ENCODE measurements at regions of chr3 and their contacts with region 1.

Region 1: DNA sequence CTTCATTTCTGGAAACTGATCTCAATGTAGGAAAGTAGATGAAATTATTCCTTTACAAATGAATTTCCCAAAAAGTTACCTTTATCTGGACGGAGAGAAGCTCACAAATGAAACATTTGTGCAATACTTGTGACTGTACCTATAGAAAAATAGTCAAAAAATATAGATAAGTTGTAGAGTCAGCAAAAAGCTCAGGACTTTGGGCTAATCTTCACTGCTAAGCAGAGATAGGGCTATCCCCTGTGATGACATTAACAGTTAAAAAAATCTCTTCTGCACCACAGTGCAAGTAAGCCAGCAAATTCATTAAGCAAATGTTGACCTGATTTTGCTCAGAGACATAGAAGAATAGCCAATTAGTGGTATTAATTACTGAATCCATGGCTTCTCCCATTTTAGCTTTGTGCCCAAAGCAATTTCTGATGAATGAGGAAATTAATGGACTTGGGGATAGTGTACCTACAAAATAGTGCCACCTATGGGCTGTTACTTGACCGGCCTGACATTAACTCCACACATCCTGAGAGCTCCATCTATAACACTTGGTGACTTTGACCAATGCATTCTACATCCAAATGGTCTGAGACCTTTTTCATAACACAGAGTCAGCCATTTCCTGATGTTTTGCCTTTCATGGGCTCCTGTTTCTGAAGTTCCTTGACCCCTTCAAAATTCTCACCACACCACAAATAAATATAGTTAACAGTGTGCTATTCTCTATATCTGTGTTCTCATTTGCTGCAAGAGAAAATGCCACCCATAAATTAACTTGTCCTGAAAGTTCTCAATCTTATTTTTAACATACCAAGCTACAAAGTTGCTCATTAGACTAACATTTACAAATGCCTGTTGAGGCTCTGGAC is 105.0 kb downstream of the SSR3 start:
- DNase-seq: peak in 1 of 5 donors; percentile 10
- H3K4me3 ChIP-seq: no peak overlapping the region
- H3K4me3 Mint-ChIP-seq: no peak overlapping the region
- H3K27ac ChIP-seq: no peak overlapping the region
- H3K27ac Mint-ChIP-seq: no peak overlapping the region
- H3K4me1 ChIP-seq: no peaks in the 10 kb centered on the region
- H3K4me1 Mint-ChIP-seq: no peaks in the 10 kb centered on the region
- H3K27me3 ChIP-seq: no peaks in the 10 kb centered on the region
- H3K27me3 Mint-ChIP-seq: peaks cover 2 to 4% of the 10 kb centered on the region in 2 donors

Region 2: GRCh38 chr3:156469456-156469855 is 19.5 kb after region 1 on chr3:
- CTCF ChIA-PET with region 1: interaction called, 26 read pairs
- POLR2A ChIA-PET with region 1: no interaction called
- intact Hi-C with region 1: no loop called
- DNase-seq: no peak
- H3K4me3 ChIP-seq: no peak overlapping the region
- H3K4me3 Mint-ChIP-seq: no peak overlapping the region
- H3K27ac ChIP-seq: no peak overlapping the region
- H3K27ac Mint-ChIP-seq: no peak overlapping the region
- H3K4me1 ChIP-seq: no peaks in the 10 kb centered on the region
- H3K4me1 Mint-ChIP-seq: no peaks in the 10 kb centered on the region
- H3K27me3 ChIP-seq: no peaks in the 10 kb centered on the region
- H3K27me3 Mint-ChIP-seq: peaks cover 5 to 12% of the 10 kb centered on the region in 2 donors